AG04450 (cell line): ENCODE measurements at regions of chr13 and their contacts with region 1.

Region 1: GRCh38 chr13:51797664-51798488 is 6.1 kb downstream of the DHRS12 start:
- DNase-seq: no peak
- H3K4me3 ChIP-seq: no peak overlapping the region
- H3K27ac ChIP-seq: no peak overlapping the region
- H3K27me3 ChIP-seq: peaks cover 7% of the 10 kb centered on the region
- CTCF ChIP-seq: peak; percentile 46

Region 2: GRCh38 chr13:51125498-51126226 is 672.2 kb before region 1 on chr13:
- CTCF ChIA-PET with region 1: interaction called, 16 read pairs
- POLR2A ChIA-PET with region 1: no interaction called
- DNase-seq: peak; percentile 26
- H3K4me3 ChIP-seq: no peak overlapping the region
- H3K27ac ChIP-seq: no peak overlapping the region
- H3K27me3 ChIP-seq: peaks cover 7% of the 10 kb centered on the region
- CTCF ChIP-seq: peak; percentile 79

Region 3: DNA sequence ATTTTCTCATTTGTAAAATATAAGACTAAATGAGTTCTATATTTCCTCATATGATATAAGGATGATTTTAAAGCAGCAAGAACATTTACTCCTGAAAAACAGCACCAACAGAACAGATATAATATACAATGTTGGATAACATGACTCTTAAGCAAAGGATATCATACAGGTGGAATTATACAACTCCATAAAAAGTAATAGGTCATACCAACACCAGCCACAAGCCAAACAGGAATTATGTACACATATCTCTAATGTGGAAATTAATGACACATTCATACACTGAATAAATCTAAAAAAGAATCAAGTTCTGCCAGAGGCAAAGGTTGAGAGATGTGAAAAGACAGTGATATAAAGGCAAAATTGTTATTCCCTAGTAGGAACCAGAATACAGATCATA is 370.9 kb before region 1 on chr13:
- CTCF ChIA-PET with region 1: interaction called, 11 read pairs
- POLR2A ChIA-PET with region 1: no interaction called
- DNase-seq: no peak
- H3K4me3 ChIP-seq: no peak overlapping the region
- H3K27ac ChIP-seq: no peak overlapping the region
- H3K27me3 ChIP-seq: no peaks in the 10 kb centered on the region
- CTCF ChIP-seq: no peak

Region 4: GRCh38 chr13:51435002-51435578 is 362.8 kb before region 1 on chr13:
- CTCF ChIA-PET with region 1: interaction called, 43 read pairs
- POLR2A ChIA-PET with region 1: no interaction called
- DNase-seq: no peak
- H3K4me3 ChIP-seq: no peak overlapping the region
- H3K27ac ChIP-seq: no peak overlapping the region
- H3K27me3 ChIP-seq: no peaks in the 10 kb centered on the region
- CTCF ChIP-seq: peak; percentile 68

Region 5: DNA sequence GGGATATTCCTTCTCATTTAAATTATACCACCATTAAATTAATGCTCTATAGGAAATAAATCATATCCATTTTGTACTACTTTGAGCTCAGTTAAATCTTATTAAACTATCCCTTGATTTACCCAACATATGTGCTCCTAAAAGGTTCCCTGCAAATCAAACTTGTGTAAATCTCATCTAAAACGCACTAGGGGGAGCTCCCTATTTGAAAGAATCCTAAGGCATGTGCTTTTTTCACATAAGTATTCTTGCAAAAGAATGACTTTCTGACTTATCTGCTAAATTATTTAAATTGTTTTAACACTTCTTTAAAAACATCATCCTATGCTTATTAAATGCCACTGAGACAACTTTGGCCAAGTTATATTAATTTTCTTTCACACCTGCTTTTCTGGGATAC is 353.0 kb before region 1 on chr13:
- CTCF ChIA-PET with region 1: interaction called, 26 read pairs
- POLR2A ChIA-PET with region 1: no interaction called
- DNase-seq: no peak
- H3K4me3 ChIP-seq: no peak overlapping the region
- H3K27ac ChIP-seq: no peak overlapping the region
- H3K27me3 ChIP-seq: no peaks in the 10 kb centered on the region
- CTCF ChIP-seq: peak; percentile 53